ENCODE measurements at regions of chr16 and their contacts with region 1.

Region 1: DNA sequence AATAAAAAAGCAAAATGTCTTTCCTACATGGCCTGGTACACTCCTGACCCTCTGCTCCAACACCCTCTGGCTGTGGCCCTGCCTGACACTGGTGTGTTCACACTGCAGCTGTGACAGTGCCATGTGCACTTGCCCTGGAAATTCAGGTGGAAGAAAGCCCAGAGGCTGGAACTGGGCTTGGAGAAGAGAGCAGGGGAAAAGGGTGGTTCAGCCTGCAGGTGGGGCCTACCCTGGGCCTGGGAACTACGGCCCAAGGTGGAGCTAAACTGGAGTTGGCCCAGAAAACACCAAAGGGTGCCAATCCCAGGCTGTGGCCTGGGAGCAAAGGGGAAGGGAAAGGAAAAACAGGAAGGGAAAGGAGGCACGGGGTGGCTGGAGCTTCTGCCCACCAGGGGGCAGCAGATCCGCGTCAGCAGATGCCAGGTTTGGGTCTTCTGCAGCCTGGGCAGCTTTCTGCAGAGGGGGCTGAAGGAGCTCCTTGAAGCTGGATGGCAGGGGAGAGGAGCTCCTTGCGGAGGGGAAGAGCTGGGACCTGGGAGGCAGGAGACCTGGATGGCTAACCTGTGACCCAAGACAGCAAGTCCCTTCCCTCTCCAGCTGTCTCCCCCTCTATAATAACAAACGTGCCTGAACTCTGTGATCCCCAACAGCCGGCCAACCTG is 15.4 kb upstream of the CTCF start:
- DNase-seq: peak in 1 of 2 donors; percentile 69
- ATAC-seq: peak; percentile 62 to 78
- H3K4me3 ChIP-seq: no peak overlapping the region
- H3K27ac ChIP-seq: peak overlapping the region; percentile 46 to 74 (median 62)
- H3K4me1 ChIP-seq: peaks cover 39 to 51% of the 10 kb centered on the region in 2 donors
- H3K27me3 ChIP-seq: no peaks in the 10 kb centered on the region
- CTCF ChIP-seq: peak; percentile 76 to 97 (median 93)
- POLR2A ChIP-seq: no peak

Region 2: DNA sequence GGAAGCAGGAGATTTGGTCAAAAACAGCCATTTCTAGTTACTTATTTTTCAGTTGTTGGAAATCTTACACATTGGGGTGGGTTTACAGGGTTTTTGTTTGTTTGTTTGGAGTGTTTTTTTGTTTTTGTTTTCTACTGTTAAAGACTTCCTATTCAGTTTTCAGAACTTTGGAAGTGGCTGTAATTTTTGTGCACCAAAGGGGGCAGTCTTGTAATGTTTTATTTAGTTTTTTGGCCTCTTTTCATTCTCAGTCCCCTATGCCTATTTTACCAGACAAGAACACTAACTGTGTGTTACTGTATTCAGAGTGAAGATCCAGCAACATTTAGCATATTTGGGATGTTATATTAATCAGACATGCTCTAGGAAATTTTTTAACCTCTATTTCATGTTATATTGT is 174.2 kb before region 1 on chr16:
- in situ Hi-C with region 1: no loop called
- intact Hi-C with region 1: no loop called
- DNase-seq: no peak
- ATAC-seq: no peak
- H3K4me3 ChIP-seq: no peak overlapping the region
- H3K27ac ChIP-seq: no peak overlapping the region
- H3K4me1 ChIP-seq: peaks cover 0 to 3% of the 10 kb centered on the region in 2 donors
- H3K27me3 ChIP-seq: no peaks in the 10 kb centered on the region
- CTCF ChIP-seq: peak in 4 of 5 experiments; percentile 22 to 53 (median 34)
- POLR2A ChIP-seq: no peak

Region 3: DNA sequence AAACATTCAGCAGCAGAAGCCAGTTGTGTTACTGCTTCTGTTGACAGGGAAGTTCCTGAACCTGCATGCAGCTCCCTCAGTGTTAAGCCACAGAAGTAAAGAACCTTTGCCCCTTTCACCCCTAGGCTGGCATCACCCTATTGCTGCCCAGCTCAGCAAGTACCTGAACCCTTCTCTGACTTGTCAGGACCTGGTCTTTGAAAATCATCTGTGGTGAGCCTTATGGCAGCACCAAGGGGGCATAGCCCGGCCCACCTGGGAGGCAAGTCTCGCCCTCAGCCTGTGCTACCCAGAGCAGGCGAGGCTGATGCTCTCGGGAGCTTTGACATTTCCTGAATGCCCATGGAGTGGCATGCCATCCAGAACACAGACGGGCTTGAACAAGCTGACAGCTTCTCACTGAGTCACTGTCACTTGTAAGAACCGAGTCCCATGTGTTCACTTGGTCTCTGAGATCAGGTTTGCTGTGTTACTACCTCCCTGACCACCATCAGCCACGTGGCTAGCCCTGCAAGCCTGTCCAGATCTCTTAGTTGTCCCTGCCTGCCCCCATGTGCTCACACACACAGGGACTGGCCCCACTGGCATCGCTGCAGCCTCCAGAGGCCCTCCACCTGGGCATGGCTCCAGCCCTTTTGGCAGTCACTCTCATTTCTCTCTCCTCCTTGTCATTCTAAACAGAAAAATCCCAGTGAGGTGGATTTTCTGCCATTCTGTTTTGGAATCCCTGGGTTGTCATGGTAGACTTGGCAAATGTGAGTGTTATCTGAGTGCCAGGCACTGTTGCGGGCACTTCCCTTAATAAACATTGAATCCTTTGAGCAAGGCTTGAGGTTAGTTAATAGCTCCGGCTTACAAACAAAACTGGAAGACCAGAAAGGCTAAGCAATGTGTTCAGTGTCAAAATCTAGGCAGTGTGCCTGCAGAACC is 95.2 kb after region 1 on chr16:
- in situ Hi-C with region 1: loop called in 1 of 4 experiments (anchors 10 kb)
- intact Hi-C with region 1: loop called (anchors 2 kb)
- DNase-seq: peak; percentile 64 to 86
- ATAC-seq: peak; percentile 90 to 91
- H3K4me3 ChIP-seq: no peak overlapping the region
- H3K27ac ChIP-seq: peak overlapping the region; percentile 45 to 74 (median 64)
- H3K4me1 ChIP-seq: peaks cover 21 to 37% of the 10 kb centered on the region in 2 donors
- H3K27me3 ChIP-seq: peaks cover 16 to 19% (median 18%) of the 10 kb centered on the region in 3 donors
- CTCF ChIP-seq: no peak
- POLR2A ChIP-seq: peak in 1 of 2 donors; percentile 12